ENCODE measurements at regions of chr19 and their contacts with region 1.

Region 1: GRCh38 chr19:4246767-4247593 is at the start of gene YJU2:
- DNase-seq: peak; percentile 99
- H3K4me3 Mint-ChIP-seq: peak within 1 kb of the TSS; percentile 88
- H3K27ac Mint-ChIP-seq: peak within 1 kb of the TSS; percentile 96
- H3K4me1 Mint-ChIP-seq: peaks cover 10% of the 10 kb centered on the region
- H3K27me3 Mint-ChIP-seq: no peaks in the 10 kb centered on the region
- total RNA-seq, gene YJU2: 29.7 and 30.8 TPM in 2 replicates

Region 2: DNA sequence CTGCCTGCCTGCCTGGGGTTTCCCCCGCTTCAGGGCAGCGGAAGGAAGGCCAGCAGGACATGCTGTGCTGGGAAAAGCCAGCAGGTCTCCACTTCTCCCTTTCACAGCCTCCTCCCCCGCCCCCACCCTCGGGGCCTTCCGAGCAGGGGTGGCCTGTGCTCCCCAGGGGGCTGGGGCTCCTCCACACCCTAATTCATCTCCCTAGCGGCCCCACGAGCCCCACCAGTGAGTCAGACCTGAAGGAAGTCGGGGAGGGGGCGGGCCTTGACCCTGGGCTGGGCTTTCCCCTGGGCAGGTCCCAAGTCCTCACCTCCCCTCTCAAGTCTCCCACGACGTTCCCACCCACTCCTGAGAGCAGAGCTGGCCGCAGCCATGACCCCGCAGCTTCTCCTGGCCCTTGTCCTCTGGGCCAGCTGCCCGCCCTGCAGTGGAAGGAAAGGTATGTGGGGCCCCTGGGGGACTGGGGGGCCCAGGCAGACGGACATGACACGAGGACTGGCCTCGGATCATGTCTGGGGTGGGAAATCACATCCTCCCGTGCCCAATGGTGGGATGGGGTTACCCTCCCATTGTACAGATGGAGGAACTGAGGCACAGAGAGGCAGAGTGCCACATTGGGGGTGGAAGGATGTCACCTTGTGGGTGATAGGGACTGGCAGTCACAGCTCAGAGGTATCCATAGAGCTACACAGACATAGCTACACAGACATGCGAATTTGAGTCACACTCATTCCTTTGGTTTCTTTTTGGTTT is 17.6 kb before region 1 on chr19 and contains the start of gene EBI3:
- intact Hi-C with region 1: loop called (anchors 1 kb)
- DNase-seq: no peak
- H3K4me3 Mint-ChIP-seq: no peak within 1 kb of the TSS
- H3K27ac Mint-ChIP-seq: no peak within 1 kb of the TSS
- H3K4me1 Mint-ChIP-seq: peaks cover 7% of the 10 kb centered on the region
- H3K27me3 Mint-ChIP-seq: no peaks in the 10 kb centered on the region
- total RNA-seq, gene EBI3: 47.0 and 55.4 TPM in 2 replicates

Region 3: GRCh38 chr19:4260613-4261191 is 13.7 kb after region 1 on chr19:
- intact Hi-C with region 1: no loop called
- DNase-seq: no peak
- H3K4me3 Mint-ChIP-seq: no peak overlapping the region
- H3K27ac Mint-ChIP-seq: no peak overlapping the region
- H3K4me1 Mint-ChIP-seq: no peaks in the 10 kb centered on the region
- H3K27me3 Mint-ChIP-seq: no peaks in the 10 kb centered on the region

Region 4: DNA sequence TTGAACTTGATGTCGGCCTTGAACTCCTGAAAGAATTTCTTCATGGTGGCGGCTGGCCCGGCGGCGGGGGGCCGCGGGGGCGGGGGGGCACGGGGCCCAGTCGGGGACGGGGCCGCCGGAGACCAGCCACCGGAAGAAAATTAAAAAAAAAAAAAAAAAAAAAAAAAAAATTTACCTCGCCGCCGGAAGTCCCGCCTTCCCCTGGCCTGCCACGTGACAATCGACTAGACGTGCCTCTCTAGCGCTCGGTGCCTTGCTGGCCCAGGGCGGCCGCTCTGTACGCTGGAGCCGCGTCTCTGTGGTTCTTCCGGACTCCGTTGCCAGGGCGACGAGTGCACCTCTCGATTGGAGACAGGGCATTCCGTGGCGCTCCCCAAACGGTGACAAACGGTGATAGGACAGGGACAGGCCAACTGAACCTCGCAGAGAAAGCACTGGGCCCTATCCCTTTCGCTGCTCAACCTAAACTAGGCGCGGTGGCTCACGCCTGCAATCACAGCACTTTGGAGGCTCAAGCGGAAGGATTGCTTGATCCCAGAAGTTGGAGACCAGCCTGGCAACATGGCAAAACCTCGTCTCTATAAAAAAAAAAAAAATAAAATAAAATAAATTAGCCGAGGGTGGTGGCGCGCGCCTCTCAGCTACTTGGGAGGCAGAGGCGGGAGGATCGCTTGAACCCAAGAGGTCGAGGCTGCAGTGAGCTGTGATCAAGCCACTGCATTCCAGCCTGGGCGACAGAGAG is 210.8 kb after region 1 on chr19 and contains the start of gene UBXN6:
- intact Hi-C with region 1: loop called (anchors 1 kb)
- DNase-seq: peak; percentile 98
- H3K4me3 Mint-ChIP-seq: peak within 1 kb of the TSS; percentile 92
- H3K27ac Mint-ChIP-seq: peak within 1 kb of the TSS; percentile 85
- H3K4me1 Mint-ChIP-seq: peaks cover 12% of the 10 kb centered on the region
- H3K27me3 Mint-ChIP-seq: no peaks in the 10 kb centered on the region
- total RNA-seq, gene UBXN6: 51.7 and 52.8 TPM in 2 replicates

Measured in activated T-helper 2 cell treated with anti-CD3 and anti-CD28 coated beads, Interferon-gamma antibody, Interleukin-2, Interleukin-4, amounts not matched to agents 10 μg/mL and 5 μg/mL and 100 μg/mL, durations not matched to agents 14 hours and 24 hours and 36 hours (primary cell).